ENCODE measurements at regions of chr11 and their contacts with region 1.

Region 1: GRCh38 chr11:123741159-123742028 is at the start of gene ZNF202:
- DNase-seq: peak; percentile 83 to 92 (median 89)
- ATAC-seq: peak; percentile 98
- H3K4me3 ChIP-seq: peak within 1 kb of the TSS; percentile 92
- H3K4me3 Mint-ChIP-seq: peak within 1 kb of the TSS; percentile 85 to 100 (median 96)
- H3K27ac ChIP-seq: peak within 1 kb of the TSS; percentile 85
- H3K27ac Mint-ChIP-seq: peak within 1 kb of the TSS; percentile 91 to 98 (median 95)
- H3K4me1 ChIP-seq: peaks cover 19% of the 10 kb centered on the region in 2 donors
- H3K4me1 Mint-ChIP-seq: peaks cover 30 to 57% (median 46%) of the 10 kb centered on the region in 7 donors
- H3K27me3 ChIP-seq: no peaks in the 10 kb centered on the region
- H3K27me3 Mint-ChIP-seq: peaks cover 0 to 24% (median 6%) of the 10 kb centered on the region in 5 donors
- total RNA-seq, gene ZNF202: 13.0 to 27.0 (median 18.6) TPM

Region 2: GRCh38 chr11:123755344-123755743 is 13.9 kb after region 1 on chr11:
- CTCF ChIA-PET with region 1: interaction called, 3 read pairs
- POLR2A ChIA-PET with region 1: no interaction called
- intact Hi-C with region 1: loop called in 1 of 2 experiments (anchors 1 kb)
- DNase-seq: no peak
- ATAC-seq: no peak
- H3K4me3 ChIP-seq: no peak overlapping the region
- H3K4me3 Mint-ChIP-seq: peak overlapping the region in 1 of 10 donors; percentile 49
- H3K27ac ChIP-seq: no peak overlapping the region
- H3K27ac Mint-ChIP-seq: peak overlapping the region in 1 of 9 donors; percentile 74
- H3K4me1 ChIP-seq: no peaks in the 10 kb centered on the region
- H3K4me1 Mint-ChIP-seq: peaks cover 0 to 67% (median 0%) of the 10 kb centered on the region in 7 donors
- H3K27me3 ChIP-seq: no peaks in the 10 kb centered on the region
- H3K27me3 Mint-ChIP-seq: peaks cover 3 to 44% (median 42%) of the 10 kb centered on the region in 5 donors

Region 3: GRCh38 chr11:124114942-124115781 is 373.8 kb after region 1 on chr11 and contains the start of gene VWA5A:
- CTCF ChIA-PET with region 1: no interaction called
- POLR2A ChIA-PET with region 1: no interaction called
- intact Hi-C with region 1: loop called (anchors 1 kb)
- DNase-seq: peak; percentile 22 to 73 (median 59)
- ATAC-seq: peak; percentile 97
- H3K4me3 ChIP-seq: peak within 1 kb of the TSS; percentile 89
- H3K4me3 Mint-ChIP-seq: peak within 1 kb of the TSS; percentile 86 to 100 (median 90)
- H3K27ac ChIP-seq: peak within 1 kb of the TSS; percentile 41
- H3K27ac Mint-ChIP-seq: peak within 1 kb of the TSS; percentile 66 to 95 (median 83)
- H3K4me1 ChIP-seq: peaks cover 7 to 8% of the 10 kb centered on the region in 2 donors
- H3K4me1 Mint-ChIP-seq: peaks cover 13 to 37% (median 22%) of the 10 kb centered on the region in 7 donors
- H3K27me3 ChIP-seq: no peaks in the 10 kb centered on the region
- H3K27me3 Mint-ChIP-seq: peaks cover 0 to 15% (median 12%) of the 10 kb centered on the region in 5 donors
- total RNA-seq, gene VWA5A: 5.2 to 10.2 (median 8.3) TPM

Region 4: DNA sequence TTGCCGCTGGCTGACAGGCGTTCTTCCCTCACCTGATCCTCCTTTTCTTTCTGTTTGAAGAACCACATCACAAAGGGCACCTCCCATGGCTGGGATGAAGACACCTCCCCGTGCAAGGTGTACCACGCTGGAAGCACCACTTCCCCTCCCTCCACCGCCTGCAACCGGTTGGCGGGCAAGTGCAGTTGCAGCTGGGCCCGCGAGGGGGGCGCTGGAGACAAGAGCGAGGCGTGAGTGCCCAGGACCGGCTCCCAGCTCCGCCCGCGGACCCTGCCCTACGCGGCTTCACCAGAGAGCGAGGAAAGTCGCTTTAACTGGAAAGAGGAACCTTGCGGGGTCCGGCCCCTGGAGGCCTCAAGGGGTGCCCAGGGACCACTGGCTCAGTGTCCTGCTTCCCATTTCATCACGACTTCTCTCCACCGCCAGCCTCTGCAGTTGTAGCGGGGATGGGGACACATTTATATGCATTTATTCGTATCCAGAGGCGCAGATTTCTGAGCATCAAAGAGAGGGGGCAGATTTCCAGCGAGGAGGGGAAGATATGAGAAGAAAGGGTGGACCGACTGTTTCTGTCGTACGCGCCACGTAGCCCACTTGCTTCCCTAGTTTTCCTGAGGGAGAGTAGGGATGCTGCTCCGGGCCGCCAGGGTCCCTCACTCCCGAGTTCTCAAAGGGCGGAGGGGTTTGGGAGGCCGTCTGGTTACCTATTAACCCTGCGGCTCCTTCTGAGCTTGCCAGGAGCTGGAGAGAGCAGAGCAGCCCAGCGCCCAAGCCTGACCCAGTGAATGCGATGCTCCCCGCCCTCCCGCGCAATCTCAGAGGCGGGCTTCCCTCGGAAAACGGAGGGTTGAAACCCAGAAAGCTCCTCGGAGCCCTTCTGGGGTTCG is 1017.2 kb after region 1 on chr11:
- CTCF ChIA-PET with region 1: no interaction called
- POLR2A ChIA-PET with region 1: no interaction called
- intact Hi-C with region 1: no loop called
- DNase-seq: peak in 8 of 9 donors; percentile 61 to 73 (median 66)
- ATAC-seq: peak; percentile 78
- H3K4me3 ChIP-seq: peak overlapping the region; percentile 27
- H3K4me3 Mint-ChIP-seq: peak overlapping the region; percentile 52 to 98 (median 76)
- H3K27ac ChIP-seq: no peak overlapping the region
- H3K27ac Mint-ChIP-seq: peak overlapping the region in 2 of 9 donors; percentile 38 to 41
- H3K4me1 ChIP-seq: peaks cover 8 to 31% of the 10 kb centered on the region in 2 donors
- H3K4me1 Mint-ChIP-seq: peaks cover 6 to 40% (median 24%) of the 10 kb centered on the region in 7 donors
- H3K27me3 ChIP-seq: peaks cover 7 to 16% of the 10 kb centered on the region in 2 donors
- H3K27me3 Mint-ChIP-seq: peaks cover 36 to 60% (median 53%) of the 10 kb centered on the region in 5 donors